ENCODE measurements at regions of chr2 and their contacts with region 1.

Region 1: GRCh38 chr2:171180229-171180930 is 19.7 kb upstream of the TLK1 start:
- DNase-seq: no peak
- H3K4me3 ChIP-seq: no peak overlapping the region
- H3K27ac ChIP-seq: no peak overlapping the region
- H3K4me1 ChIP-seq: no peaks in the 10 kb centered on the region
- H3K27me3 ChIP-seq: no peaks in the 10 kb centered on the region
- CTCF ChIP-seq: no peak

Region 2: DNA sequence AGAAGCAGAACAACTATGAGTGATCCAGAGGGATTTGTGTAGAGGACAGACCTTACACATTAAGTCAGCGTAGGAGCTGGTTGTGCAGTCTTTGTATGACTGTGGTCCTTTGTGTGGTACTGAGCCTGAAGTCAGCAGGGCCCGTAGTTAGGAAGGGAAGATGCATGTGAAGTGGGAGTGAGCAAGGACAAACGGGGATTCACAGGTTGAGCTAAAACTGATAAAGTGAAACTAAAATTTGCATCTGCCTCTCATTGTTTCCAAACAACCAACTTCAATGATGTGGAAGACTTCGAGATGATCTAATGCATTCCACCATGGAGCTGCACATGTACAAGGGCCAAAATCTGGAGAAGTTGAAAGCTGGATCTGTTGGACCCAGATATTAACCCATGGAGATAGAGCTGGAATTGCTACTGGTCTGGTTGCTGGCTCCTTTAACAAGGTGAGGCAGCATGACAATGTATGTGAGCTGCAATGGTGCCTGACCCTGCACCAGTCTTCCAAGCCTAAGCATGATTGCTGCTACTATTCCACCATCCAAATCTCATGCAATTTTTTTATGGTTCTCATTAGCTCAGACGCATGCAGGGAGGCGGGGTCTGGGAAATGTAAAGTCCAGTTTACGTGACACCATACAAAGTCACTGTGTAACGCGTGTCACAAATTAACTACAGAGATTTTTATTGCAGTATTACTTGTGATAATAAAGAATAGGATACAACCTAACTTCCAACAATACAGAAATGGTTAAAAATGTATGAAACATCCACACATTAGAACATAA is 329.8 kb after region 1 on chr2:
- CTCF ChIA-PET with region 1: no interaction called
- POLR2A ChIA-PET with region 1: interaction called, 17 read pairs
- intact Hi-C with region 1: no loop called
- DNase-seq: no peak
- H3K4me3 ChIP-seq: no peak overlapping the region
- H3K27ac ChIP-seq: no peak overlapping the region
- H3K4me1 ChIP-seq: no peaks in the 10 kb centered on the region
- H3K27me3 ChIP-seq: no peaks in the 10 kb centered on the region
- CTCF ChIP-seq: no peak

Region 3: GRCh38 chr2:172674034-172674967 is 1493.9 kb after region 1 on chr2:
- CTCF ChIA-PET with region 1: no interaction called
- POLR2A ChIA-PET with region 1: interaction called, 12 read pairs
- intact Hi-C with region 1: no loop called
- DNase-seq: peak; percentile 23
- H3K4me3 ChIP-seq: no peak overlapping the region
- H3K27ac ChIP-seq: no peak overlapping the region
- H3K4me1 ChIP-seq: no peaks in the 10 kb centered on the region
- H3K27me3 ChIP-seq: no peaks in the 10 kb centered on the region
- CTCF ChIP-seq: peak; percentile 56